ENCODE measurements at regions of chr3 and their contacts with region 1.

Region 1: DNA sequence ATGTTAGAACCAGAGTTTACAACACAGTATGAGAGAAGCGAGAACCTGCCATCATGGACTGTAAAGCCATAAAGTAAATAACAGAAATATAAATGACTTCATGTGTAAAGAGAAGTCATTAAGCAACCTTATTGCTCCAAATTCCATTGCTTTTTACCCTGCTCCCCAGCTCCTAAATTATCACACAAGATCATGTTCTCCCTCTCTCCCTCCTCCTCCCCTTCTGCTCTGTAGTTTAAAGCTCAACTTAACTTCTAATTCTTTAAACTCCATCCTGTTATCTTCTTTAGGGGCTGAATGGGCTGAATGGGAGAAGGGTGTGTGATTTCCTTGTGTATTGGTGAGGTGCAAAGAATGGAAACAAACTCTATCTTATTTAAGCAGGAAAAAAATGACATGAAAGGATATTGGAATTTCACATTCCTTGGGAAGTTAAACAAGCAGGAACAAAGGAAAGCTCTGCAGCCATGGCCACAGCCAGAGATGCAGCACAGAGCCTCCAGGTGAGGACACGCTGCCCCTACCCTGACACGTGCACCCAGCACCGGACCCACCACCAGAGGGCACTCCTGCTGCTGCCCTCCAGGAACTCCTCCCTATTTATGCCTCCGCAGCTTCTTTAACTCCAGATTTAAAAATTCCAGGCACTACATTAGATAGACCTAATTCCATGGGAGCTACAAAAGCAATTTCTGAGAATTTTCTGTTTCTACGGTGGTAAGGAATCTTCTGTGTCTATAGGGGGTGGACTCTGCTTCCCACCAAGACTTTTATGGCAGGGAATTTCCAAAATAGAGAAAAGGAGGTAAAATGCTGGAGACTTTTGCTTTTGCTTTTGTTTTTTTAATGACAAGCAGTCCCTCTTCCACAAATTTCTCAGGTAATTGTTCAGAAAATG is 76.9 kb upstream of the ABI3BP start:
- DNase-seq: peak; percentile 43 to 66 (median 57)
- H3K4me3 ChIP-seq: peak overlapping the region in 1 of 7 experiments; percentile 30
- H3K27ac ChIP-seq: no peak overlapping the region
- H3K4me1 ChIP-seq: peaks cover 0 to 2% (median 0%) of the 10 kb centered on the region in 4 experiments
- H3K27me3 ChIP-seq: no peaks in the 10 kb centered on the region

Region 2: GRCh38 chr3:101203411-101203810 is 133.3 kb after region 1 on chr3:
- CTCF ChIA-PET with region 1: no interaction called
- POLR2A ChIA-PET with region 1: no interaction called
- DNase-seq: no peak
- H3K4me3 ChIP-seq: no peak overlapping the region
- H3K27ac ChIP-seq: no peak overlapping the region
- H3K4me1 ChIP-seq: peaks cover 0 to 11% (median 2%) of the 10 kb centered on the region in 4 experiments
- H3K27me3 ChIP-seq: no peaks in the 10 kb centered on the region

Region 3: DNA sequence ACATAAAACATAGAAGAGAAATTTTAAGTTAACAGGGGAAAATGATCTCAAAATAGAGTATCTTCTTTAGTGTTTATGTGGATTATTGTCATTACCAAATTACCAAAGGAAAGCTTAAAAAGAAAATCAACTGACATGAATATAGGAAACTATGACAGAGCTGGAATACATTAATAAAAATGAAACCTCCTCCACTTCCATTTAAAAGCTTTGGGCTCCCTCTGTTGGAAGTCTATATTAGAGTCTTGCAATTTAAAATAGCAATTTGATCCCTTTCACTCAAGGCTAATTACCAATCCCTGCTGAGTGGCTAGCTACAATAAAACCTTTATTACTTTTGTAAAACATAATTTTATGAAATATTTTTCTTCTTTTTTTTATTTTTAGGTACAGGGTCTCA is 311.7 kb after region 1 on chr3:
- CTCF ChIA-PET with region 1: interaction called, 10 read pairs
- POLR2A ChIA-PET with region 1: no interaction called
- DNase-seq: peak; percentile 53 to 80 (median 77)
- H3K4me3 ChIP-seq: no peak overlapping the region
- H3K27ac ChIP-seq: no peak overlapping the region
- H3K4me1 ChIP-seq: peaks cover 0 to 15% (median 3%) of the 10 kb centered on the region in 4 experiments
- H3K27me3 ChIP-seq: no peaks in the 10 kb centered on the region